ENCODE measurements at regions of chr14 and their contacts with region 1.

Region 1: GRCh38 chr14:65206448-65207096 is 104.3 kb upstream of the MAX start:
- DNase-seq: peak; percentile 88
- ATAC-seq: peak; percentile 83
- H3K4me3 ChIP-seq: peak overlapping the region; percentile 56
- H3K27ac ChIP-seq: peak overlapping the region; percentile 96
- H3K4me1 ChIP-seq: peaks cover 63% of the 10 kb centered on the region
- H3K27me3 ChIP-seq: no peaks in the 10 kb centered on the region
- CTCF ChIP-seq: no peak
- EP300 ChIP-seq: peak; percentile 56 to 70; a peak in 3 of 4 replicates
- POLR2A ChIP-seq: peak; percentile 33; the same call in 1 of the 2 replicates
- RAD21 ChIP-seq: no peak

Region 2: GRCh38 chr14:65179918-65180724 is 26.5 kb before region 1 on chr14:
- CTCF ChIA-PET with region 1: interaction called, 3 read pairs
- POLR2A ChIA-PET with region 1: interaction called, 4 read pairs
- RAD21 ChIA-PET with region 1: interaction called, 4 read pairs
- SMC1A ChIA-PET with region 1: interaction called, 5 read pairs
- in situ Hi-C with region 1: no loop called
- intact Hi-C with region 1: loop called (anchors 1 kb)
- DNase-seq: peak; percentile 94
- ATAC-seq: peak; percentile 94
- H3K4me3 ChIP-seq: peak overlapping the region; percentile 9; the same call in 1 of the 2 replicates
- H3K27ac ChIP-seq: peak overlapping the region; percentile 99
- H3K4me1 ChIP-seq: peaks cover 32% of the 10 kb centered on the region
- H3K27me3 ChIP-seq: no peaks in the 10 kb centered on the region
- CTCF ChIP-seq: no peak
- EP300 ChIP-seq: peak; percentile 86 to 87
- POLR2A ChIP-seq: no peak
- RAD21 ChIP-seq: peak; percentile 11; the same call in 1 of the 2 replicates

Region 3: DNA sequence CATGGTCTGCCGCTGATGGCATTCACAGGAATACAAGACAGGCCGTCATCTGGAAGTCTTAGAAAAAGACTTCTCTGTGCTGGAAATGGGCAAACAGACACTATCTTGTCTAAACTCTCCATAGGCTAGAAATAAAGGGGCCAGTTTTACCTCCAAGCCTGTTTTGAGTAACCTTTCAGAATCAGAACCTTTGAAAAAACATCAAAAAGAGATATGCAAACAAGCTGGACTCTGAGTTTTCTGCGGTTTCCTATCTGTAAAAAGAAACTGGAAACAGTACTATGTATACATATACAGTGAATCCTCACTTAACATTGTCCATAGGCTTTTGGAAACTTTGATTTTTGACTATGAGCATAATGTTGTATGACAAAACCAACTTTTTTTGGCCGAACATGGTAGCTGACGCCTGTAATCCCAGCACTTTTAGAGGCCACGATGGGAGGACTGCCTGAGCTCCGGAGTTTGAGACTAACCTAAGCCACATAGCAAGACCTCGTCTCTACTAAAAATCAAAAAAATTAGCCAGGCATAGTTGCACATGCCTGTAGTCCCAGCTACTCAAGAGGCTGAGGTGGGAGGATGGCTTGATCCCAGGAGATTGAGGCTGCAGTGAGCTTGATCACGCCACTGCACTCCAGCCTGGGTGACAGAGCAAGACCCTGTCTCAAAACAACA is 11.4 kb before region 1 on chr14:
- CTCF ChIA-PET with region 1: interaction called, 4 read pairs
- POLR2A ChIA-PET with region 1: interaction called, 3 read pairs
- RAD21 ChIA-PET with region 1: interaction called, 12 read pairs
- SMC1A ChIA-PET with region 1: interaction called, 17 read pairs
- in situ Hi-C with region 1: no loop called
- intact Hi-C with region 1: no loop called
- DNase-seq: peak; percentile 68
- ATAC-seq: peak; percentile 96
- H3K4me3 ChIP-seq: peak overlapping the region; percentile 37
- H3K27ac ChIP-seq: peak overlapping the region; percentile 75
- H3K4me1 ChIP-seq: peaks cover 21% of the 10 kb centered on the region
- H3K27me3 ChIP-seq: no peaks in the 10 kb centered on the region
- CTCF ChIP-seq: no peak
- EP300 ChIP-seq: peak in 1 of 2 experiments; percentile 70; a peak in 2 of 4 replicates
- POLR2A ChIP-seq: no peak
- RAD21 ChIP-seq: 0 out of 2 replicates have a peak, but pooled peaks have one; percentile 1

Region 4: DNA sequence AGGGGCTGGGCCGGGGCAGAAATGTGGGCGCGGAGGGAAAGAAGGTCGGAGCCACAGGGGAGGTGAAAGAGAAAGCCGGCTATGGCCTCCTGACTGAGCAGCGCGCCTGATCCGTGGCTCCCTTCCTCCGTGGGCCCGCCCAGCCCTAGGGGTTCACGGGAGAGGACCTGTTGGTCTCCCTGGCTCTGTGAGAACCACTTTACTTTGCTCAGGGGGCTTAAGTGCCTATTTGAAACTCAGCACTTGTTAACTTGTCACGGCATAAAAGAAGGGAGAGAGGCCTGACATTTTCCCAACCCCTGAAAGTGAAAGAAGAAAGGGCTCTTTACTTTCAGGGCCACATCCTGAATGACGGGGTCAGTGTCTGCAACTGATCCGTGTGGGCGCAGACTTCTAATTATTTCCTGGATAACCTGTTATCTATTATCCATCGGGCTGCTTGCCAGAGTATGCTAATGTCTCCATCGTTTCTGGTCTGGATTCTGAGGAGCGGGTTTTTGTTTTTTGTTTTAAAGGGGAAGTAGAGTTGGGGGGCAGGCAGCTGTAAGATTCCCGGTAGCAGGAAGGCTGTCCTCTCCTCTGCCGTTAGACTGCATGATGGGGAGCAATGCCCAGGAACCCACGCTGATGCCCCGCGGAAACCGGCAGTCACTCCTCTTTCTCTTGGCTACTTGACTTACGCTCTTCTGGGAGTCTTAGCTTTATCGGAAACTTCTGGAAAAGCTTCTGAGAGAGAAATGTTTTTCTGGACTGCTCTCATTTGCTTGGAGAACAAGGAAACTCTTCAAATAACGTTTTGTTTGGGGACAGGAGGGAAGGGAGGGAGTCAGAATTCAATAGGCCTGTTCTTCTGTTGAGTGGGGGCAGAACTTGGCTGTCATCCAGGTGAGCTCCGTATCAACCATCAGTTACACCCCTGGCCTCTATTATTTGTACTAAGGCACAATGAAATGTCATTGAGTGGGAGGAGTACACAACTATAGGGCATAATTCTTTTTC is 23.5 kb after region 1 on chr14:
- CTCF ChIA-PET with region 1: interaction called, 9 read pairs
- POLR2A ChIA-PET with region 1: interaction called, 7 read pairs
- RAD21 ChIA-PET with region 1: interaction called, 7 read pairs
- SMC1A ChIA-PET with region 1: interaction called, 14 read pairs
- in situ Hi-C with region 1: no loop called
- intact Hi-C with region 1: loop called (anchors 1 kb)
- DNase-seq: no peak
- ATAC-seq: peak; percentile 60
- H3K4me3 ChIP-seq: 0 out of 2 replicates have a peak overlapping the region, but pooled peaks have one; percentile 26
- H3K27ac ChIP-seq: peak overlapping the region; percentile 64
- H3K4me1 ChIP-seq: peaks cover 41% of the 10 kb centered on the region
- H3K27me3 ChIP-seq: no peaks in the 10 kb centered on the region
- CTCF ChIP-seq: no peak
- EP300 ChIP-seq: no peak
- POLR2A ChIP-seq: no peak
- RAD21 ChIP-seq: no peak